Dorsolateral prefrontal cortex (tissue), 120 donors: ENCODE measurements at regions of chr1 and their contacts with region 1.

Region 1: GRCh38 chr1:180482425-180483275 is 19.7 kb downstream of the ACBD6 start:
- DNase-seq: peak in 1 of 10 donors; percentile 16
- H3K4me3 ChIP-seq: peak overlapping the region in 9 of 59 donors; percentile 2 to 28 (median 9)
- H3K27ac ChIP-seq: peak overlapping the region in 2 of 59 donors; percentile 18 to 53
- H3K27me3 ChIP-seq: no peaks in the 10 kb centered on the region
- CTCF ChIP-seq: peak; percentile 68 to 93 (median 83)

Region 2: DNA sequence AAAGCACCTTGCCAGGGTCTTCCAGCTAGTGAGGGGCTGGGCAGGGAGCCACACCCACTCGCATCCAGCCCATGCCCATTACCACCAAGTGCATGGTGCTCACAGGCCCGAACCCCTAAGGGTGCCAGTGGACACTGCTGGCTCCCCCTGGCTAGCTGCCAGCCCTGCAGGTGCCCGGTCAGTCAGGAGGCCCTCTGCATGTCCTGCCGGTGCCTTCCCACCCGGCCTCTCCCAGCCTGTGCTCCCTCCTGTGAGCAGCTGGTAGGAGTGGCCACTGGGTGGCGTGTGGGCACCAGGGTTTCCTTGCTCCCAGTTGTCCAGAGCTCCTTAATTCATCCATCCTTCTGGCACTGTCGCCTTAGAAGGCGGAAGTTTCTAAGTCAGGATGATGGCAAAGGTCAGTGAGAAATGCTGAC is 294.6 kb before region 1 on chr1:
- intact Hi-C with region 1: loop called (anchors 2 to 10 kb)
- DNase-seq: peak in 9 of 10 donors; percentile 31 to 69 (median 57)
- H3K4me3 ChIP-seq: no peak overlapping the region
- H3K27ac ChIP-seq: no peak overlapping the region
- H3K27me3 ChIP-seq: no peaks in the 10 kb centered on the region
- CTCF ChIP-seq: peak in 55 of 56 donors; percentile 32 to 77 (median 66)

Region 3: GRCh38 chr1:180252638-180253536 is 229.8 kb before region 1 on chr1:
- intact Hi-C with region 1: loop called (anchors 5 kb)
- DNase-seq: peak in 2 of 10 donors; percentile 35 to 47
- H3K4me3 ChIP-seq: no peak overlapping the region
- H3K27ac ChIP-seq: no peak overlapping the region
- H3K27me3 ChIP-seq: peaks cover 0 to 72% (median 49%) of the 10 kb centered on the region in 45 donors
- CTCF ChIP-seq: peak; percentile 29 to 80 (median 63)